Sigmoid colon (tissue), 7 donors: ENCODE measurements at regions of chr6 and their contacts with region 1.

Region 1: GRCh38 chr6:150876598-150876997 is 11.1 kb downstream of the MTHFD1L start:
- DNase-seq: peak; percentile 85
- H3K4me3 ChIP-seq: no peak overlapping the region
- H3K27ac ChIP-seq: peak overlapping the region in 3 of 4 donors; percentile 60 to 70 (median 61)
- H3K4me1 ChIP-seq: peaks cover 0 to 40% (median 25%) of the 10 kb centered on the region in 4 donors
- H3K27me3 ChIP-seq: no peaks in the 10 kb centered on the region
- CTCF ChIP-seq: peak; percentile 23 to 38 (median 30)
- EP300 ChIP-seq: peak in 1 of 4 donors; percentile 20
- POLR2A ChIP-seq: no peak

Region 2: GRCh38 chr6:150813319-150813992 is 63.1 kb before region 1 on chr6:
- intact Hi-C with region 1: loop called (anchors 2 kb)
- DNase-seq: no peak
- H3K4me3 ChIP-seq: no peak overlapping the region
- H3K27ac ChIP-seq: peak overlapping the region in 3 of 4 donors; percentile 16 to 52 (median 27)
- H3K4me1 ChIP-seq: peaks cover 0 to 22% (median 8%) of the 10 kb centered on the region in 4 donors
- H3K27me3 ChIP-seq: no peaks in the 10 kb centered on the region
- CTCF ChIP-seq: no peak
- EP300 ChIP-seq: no peak
- POLR2A ChIP-seq: no peak